HEK293T (cell line): ENCODE measurements at regions of chr1 and their contacts with region 1.

Region 1: GRCh38 chr1:151254217-151255213 is at the start of gene PSMD4:
- DNase-seq: peak; percentile 99

Region 2: DNA sequence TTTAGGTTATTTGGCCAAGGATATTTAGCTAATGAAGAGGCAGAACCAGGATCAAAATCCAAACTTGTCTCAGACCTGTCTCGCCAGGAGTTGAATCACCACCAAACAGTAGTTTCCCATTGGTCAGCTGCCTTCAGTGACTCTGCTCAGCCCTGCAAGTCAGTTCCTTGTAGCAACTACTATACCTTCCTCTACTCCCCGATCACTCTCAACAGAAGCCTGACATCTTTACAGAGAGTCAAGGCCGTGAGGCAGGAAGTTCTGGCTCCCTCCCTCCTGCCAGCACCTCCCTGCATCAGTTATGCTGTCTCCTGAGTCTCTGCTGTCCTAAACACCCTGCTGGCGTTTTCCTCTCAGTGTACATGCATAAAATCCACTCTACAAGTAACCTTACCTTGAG is 13.2 kb after region 1 on chr1:
- CTCF ChIA-PET with region 1: interaction called, 6 read pairs
- POLR2A ChIA-PET with region 1: interaction called, 13 read pairs
- DNase-seq: no peak

Region 3: DNA sequence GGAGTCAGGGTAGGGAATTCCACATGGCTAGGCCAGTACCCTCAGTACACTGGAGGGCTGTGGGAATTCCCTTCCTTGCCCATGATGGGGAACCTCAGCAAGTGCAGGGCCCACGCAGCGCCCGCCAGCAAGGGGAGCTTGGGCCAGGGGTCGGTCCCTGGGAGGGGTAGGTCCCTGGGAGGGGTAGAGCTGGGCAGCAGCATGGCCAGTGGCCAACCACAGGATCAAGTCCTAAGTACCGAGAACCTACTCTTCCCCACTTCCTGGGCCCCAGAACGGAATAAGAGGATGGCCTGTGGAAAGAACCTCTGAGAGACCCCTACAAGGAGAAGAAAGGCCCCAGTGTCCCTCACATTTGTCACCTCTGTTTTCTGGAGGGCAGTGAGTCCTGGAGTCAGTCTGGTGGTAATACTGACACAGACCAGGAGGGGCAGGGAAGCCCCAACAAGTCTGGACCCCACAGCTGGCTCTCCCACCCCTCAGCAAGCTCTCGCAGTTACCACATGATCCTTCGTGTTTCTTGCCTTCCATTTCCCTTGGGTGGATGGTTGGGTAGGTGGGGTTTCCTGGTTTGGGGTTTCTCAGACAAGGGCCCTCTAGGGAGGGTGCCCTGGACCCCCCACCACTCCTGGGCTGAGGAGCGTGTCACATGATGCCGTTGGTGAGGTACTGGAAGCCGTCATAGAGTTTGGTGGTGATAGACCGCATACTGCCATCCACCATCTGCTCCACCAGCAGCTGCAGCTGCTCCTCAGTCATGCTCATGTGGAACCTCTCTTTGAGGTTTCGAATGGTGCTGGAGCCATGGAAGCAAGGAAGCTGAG is 37.9 kb after region 1 on chr1:
- CTCF ChIA-PET with region 1: no interaction called
- POLR2A ChIA-PET with region 1: no interaction called
- DNase-seq: no peak